Activated B cell treated with CpG ODN at 0.5 μM for 24 hours (primary cell): ENCODE measurements at regions of chr4 and their contacts with region 1.

Region 1: GRCh38 chr4:1266881-1267763 is 18.2 kb upstream of the CTBP1 start:
- DNase-seq: no peak
- ATAC-seq: peak; percentile 61
- H3K4me3 Mint-ChIP-seq: peak overlapping the region; percentile 84
- H3K27ac Mint-ChIP-seq: peak overlapping the region; percentile 89
- H3K4me1 Mint-ChIP-seq: peaks cover 31% of the 10 kb centered on the region
- H3K27me3 Mint-ChIP-seq: no peaks in the 10 kb centered on the region
- CTCF ChIP-seq: no peak

Region 2: GRCh38 chr4:1130316-1131186 is 136.6 kb before region 1 on chr4:
- CTCF ChIA-PET with region 1: interaction called, 46 read pairs
- POLR2A ChIA-PET with region 1: interaction called, 7 read pairs
- intact Hi-C with region 1: loop called (anchors 1 kb)
- DNase-seq: peak; percentile 63
- ATAC-seq: peak; percentile 99
- H3K4me3 Mint-ChIP-seq: no peak overlapping the region
- H3K27ac Mint-ChIP-seq: peak overlapping the region; percentile 19
- H3K4me1 Mint-ChIP-seq: peaks cover 21% of the 10 kb centered on the region
- H3K27me3 Mint-ChIP-seq: peaks cover 2% of the 10 kb centered on the region
- CTCF ChIP-seq: peak; percentile 99

Region 3: DNA sequence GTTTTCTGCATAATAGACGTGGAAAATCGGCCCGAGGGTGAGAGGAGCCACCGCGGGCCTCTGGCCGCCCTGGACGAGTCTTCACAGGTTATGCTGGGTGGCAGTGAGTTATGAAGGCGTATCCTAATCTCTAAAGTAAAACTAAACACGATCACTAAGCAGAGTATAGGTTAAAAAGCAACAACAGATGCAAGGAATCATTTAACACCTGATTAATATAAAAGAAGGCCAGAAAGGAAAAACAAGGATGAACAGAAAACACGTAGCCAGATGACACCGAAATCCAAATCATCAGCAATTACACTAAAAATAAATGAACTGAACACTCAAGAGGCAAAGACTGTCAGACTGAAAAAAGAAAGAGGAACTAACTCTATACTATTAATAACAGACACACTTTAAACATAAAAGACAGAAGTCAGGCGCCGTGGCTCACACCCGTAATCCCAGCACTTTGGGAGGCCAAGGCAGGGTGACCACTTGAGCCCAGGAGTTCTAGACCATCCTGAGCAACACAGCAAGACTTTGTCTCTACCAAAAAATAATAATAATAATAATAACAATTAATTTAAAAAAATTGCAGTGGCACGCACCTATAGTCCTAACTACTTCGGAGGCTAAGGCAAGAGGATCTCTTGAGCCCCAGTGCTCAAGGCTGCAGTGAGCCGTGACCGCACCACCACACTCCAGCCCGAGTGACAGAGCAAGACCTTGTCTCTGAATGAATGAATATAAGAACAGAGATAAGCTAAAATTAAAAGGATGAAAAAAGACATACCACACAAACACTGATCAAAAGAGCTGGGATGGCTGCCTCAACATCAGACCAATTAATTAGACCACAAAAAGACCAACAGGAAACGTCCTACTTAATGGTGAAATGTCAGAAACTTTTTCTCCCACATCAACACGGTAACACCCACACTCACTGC is 48.2 kb before region 1 on chr4:
- CTCF ChIA-PET with region 1: no interaction called
- POLR2A ChIA-PET with region 1: interaction called, 3 read pairs
- intact Hi-C with region 1: loop called (anchors 1 kb)
- DNase-seq: peak; percentile 41
- ATAC-seq: peak; percentile 88
- H3K4me3 Mint-ChIP-seq: peak overlapping the region; percentile 75
- H3K27ac Mint-ChIP-seq: peak overlapping the region; percentile 81
- H3K4me1 Mint-ChIP-seq: peaks cover 64% of the 10 kb centered on the region
- H3K27me3 Mint-ChIP-seq: no peaks in the 10 kb centered on the region
- CTCF ChIP-seq: no peak

Region 4: DNA sequence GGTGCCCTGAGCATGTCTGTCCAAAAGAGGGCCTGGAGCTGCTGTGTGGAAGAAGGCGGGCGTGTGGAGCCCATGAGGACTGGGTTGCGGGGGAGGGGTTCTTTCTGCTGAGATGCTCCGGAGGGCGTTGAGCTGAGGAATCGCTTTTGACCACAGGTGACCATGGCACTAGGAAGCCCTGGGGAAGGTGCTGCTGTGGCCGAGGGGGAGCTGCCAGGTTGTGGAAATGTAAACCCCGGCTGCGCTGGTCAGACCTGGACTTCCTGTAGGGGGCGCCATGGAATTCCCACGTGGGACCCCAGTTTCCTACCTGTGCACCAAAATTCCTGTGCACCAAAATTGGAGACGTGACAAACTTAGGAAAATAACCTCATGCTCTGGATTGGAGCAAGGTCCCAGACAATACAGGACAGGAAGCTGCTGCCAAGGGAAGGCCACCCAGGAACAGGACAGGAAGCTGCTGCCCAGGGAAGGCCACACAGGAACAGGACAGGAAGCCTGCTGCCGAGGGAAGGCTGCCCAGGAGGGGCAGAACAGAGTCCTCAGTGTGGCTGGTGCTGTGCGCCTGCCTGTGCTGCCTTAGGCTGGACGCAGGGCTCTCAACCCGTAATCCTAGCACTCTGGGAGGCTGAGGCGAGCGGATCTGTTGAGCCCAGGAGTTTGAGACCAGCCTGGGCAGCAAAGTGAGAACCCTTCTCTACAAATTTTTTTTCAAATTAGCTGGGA is 51.5 kb after region 1 on chr4:
- CTCF ChIA-PET with region 1: no interaction called
- POLR2A ChIA-PET with region 1: no interaction called
- intact Hi-C with region 1: no loop called
- DNase-seq: no peak
- ATAC-seq: no peak
- H3K4me3 Mint-ChIP-seq: no peak overlapping the region
- H3K27ac Mint-ChIP-seq: no peak overlapping the region
- H3K4me1 Mint-ChIP-seq: no peaks in the 10 kb centered on the region
- H3K27me3 Mint-ChIP-seq: no peaks in the 10 kb centered on the region
- CTCF ChIP-seq: no peak

Region 5: GRCh38 chr4:1337376-1337860 is 70.3 kb after region 1 on chr4:
- CTCF ChIA-PET with region 1: no interaction called
- POLR2A ChIA-PET with region 1: no interaction called
- intact Hi-C with region 1: no loop called
- DNase-seq: no peak
- ATAC-seq: peak; percentile 40
- H3K4me3 Mint-ChIP-seq: no peak overlapping the region
- H3K27ac Mint-ChIP-seq: peak overlapping the region; percentile 18
- H3K4me1 Mint-ChIP-seq: no peaks in the 10 kb centered on the region
- H3K27me3 Mint-ChIP-seq: no peaks in the 10 kb centered on the region
- CTCF ChIP-seq: no peak